ENCODE measurements at regions of chr11 and their contacts with region 1.

Region 1: GRCh38 chr11:16572945-16573344 is 165.5 kb upstream of the C11orf58 start:
- DNase-seq: no peak
- H3K4me3 ChIP-seq: no peak overlapping the region
- H3K27ac ChIP-seq: no peak overlapping the region
- H3K4me1 ChIP-seq: no peaks in the 10 kb centered on the region
- CTCF ChIP-seq: no peak

Region 2: GRCh38 chr11:15189641-15190365 is 1383.1 kb before region 1 on chr11:
- CTCF ChIA-PET with region 1: no interaction called
- POLR2A ChIA-PET with region 1: interaction called, 10 read pairs
- intact Hi-C with region 1: no loop called
- DNase-seq: no peak
- H3K4me3 ChIP-seq: no peak overlapping the region
- H3K27ac ChIP-seq: no peak overlapping the region
- H3K4me1 ChIP-seq: no peaks in the 10 kb centered on the region
- CTCF ChIP-seq: no peak